ENCODE measurements at regions of chr2 and their contacts with region 1.

Region 1: GRCh38 chr2:9333591-9334171 is 89.6 kb downstream of the ITGB1BP1 start:
- DNase-seq: peak; percentile 26 to 87
- H3K4me3 ChIP-seq: no peak overlapping the region
- H3K27ac ChIP-seq: peak overlapping the region; percentile 58 to 63
- H3K4me1 ChIP-seq: peaks cover 0 to 16% of the 10 kb centered on the region in 2 donors
- H3K27me3 ChIP-seq: no peaks in the 10 kb centered on the region
- CTCF ChIP-seq: peak; percentile 72 to 76 (median 74)

Region 2: DNA sequence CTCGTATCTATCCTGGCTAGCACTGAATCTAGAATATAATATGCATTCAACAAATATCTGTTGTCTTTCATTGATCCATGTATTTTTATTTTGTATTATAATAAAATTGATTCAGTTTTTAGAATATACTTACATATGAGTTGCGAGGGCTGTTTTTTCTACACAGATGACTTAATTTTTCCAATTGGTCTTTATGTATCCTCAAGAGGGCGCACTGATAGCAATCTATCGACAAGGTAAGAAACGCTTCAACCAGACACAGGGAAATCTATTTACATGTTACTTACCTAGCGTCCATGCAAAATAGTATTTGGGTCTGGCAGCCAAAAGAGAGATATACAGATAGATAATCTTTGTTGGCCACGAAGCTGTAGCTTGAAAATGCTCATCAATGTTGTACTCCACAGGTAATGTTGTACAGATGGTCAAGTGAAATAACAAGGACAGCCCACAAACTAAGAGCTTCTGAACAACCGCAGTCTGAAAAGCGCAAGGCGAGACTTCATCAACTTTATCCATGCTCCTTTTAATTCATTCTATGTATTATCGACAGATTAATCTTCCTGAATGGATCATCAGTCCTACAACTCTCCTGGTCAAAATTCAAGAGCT is 460.8 kb before region 1 on chr2:
- intact Hi-C with region 1: loop called (anchors 10 kb)
- DNase-seq: no peak
- H3K4me3 ChIP-seq: no peak overlapping the region
- H3K27ac ChIP-seq: no peak overlapping the region
- H3K4me1 ChIP-seq: no peaks in the 10 kb centered on the region
- H3K27me3 ChIP-seq: no peaks in the 10 kb centered on the region
- CTCF ChIP-seq: peak; percentile 20 to 54 (median 34)

Region 3: GRCh38 chr2:9261231-9261883 is 72.3 kb before region 1 on chr2:
- intact Hi-C with region 1: loop called (anchors 5 kb)
- DNase-seq: peak in 1 of 2 donors; percentile 78
- H3K4me3 ChIP-seq: no peak overlapping the region
- H3K27ac ChIP-seq: peak overlapping the region; percentile 85
- H3K4me1 ChIP-seq: peaks cover 39 to 82% of the 10 kb centered on the region in 2 donors
- H3K27me3 ChIP-seq: no peaks in the 10 kb centered on the region
- CTCF ChIP-seq: peak in 1 of 3 experiments; percentile 5

Measured in ascending aorta (tissue), 2 donors.